Breast epithelium (tissue), 4 donors: ENCODE measurements at regions of chr11 and their contacts with region 1.

Region 1: DNA sequence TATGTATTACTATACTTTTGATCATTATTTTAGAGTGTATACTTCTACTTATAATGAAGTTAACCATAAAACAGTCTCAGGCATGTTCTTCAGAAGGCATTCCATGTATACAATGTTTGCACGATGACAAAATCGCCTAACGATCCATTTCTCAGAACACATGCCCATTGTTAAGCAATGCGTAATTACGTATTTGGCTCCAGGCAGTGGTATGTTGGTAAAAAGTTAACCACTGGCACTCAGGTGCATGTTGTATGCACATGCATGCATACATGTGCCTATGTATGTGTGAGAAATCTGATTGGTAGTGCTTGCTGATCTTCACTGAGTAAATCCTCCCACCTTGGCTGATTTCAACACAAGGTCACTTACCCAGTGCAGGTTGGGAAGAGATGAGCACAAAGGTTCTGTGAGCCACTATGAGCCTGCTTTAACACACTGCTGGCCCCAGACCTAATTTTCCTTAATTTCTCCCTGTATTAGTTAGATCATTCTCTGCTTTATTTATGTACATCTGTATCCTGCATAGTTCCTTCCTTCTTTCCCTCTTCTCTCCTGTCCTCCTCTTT is 164.6 kb downstream of the ARHGAP42 start:
- DNase-seq: no peak
- H3K4me3 ChIP-seq: no peak overlapping the region
- H3K27ac ChIP-seq: no peak overlapping the region
- H3K4me1 ChIP-seq: no peaks in the 10 kb centered on the region
- H3K27me3 ChIP-seq: no peaks in the 10 kb centered on the region
- CTCF ChIP-seq: no peak
- POLR2A ChIP-seq: no peak

Region 2: DNA sequence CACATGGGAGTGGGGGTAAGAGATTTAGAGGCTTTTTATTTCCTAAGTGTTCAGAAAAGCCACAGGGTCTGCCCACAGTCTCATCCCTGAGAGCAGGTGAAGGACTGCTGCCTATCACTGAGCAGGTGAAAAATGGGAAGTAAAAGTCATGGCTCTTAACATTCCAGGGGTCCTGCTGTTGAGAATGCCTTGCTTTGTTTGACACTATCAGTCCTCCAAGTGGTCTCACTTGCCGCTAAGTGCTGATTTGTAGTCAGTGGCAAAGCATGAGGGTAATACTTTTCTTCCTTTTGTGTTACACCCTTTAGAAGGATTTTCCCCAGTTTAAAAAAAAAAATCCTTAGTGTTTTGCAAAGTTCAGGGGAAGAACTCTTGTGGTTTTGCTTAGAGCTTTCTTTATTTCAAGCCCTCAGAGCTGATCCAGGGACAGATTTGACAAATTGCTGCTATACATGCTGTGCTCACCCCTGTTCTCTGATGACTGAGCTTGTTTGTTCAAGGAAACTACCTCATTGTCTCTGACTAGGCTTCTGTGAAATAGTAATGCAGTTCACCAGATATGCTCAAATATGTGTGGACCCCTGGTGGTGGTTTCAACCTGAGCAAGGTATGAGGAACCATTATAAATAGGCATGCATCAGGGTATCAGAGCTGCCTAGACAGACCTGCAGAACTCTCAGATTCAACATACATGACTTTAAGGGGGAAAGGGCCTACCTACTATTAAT is 23.6 kb before region 1 on chr11:
- intact Hi-C with region 1: loop called (anchors 2 kb)
- DNase-seq: no peak
- H3K4me3 ChIP-seq: no peak overlapping the region
- H3K27ac ChIP-seq: no peak overlapping the region
- H3K4me1 ChIP-seq: peaks cover 0 to 3% of the 10 kb centered on the region in 2 donors
- H3K27me3 ChIP-seq: no peaks in the 10 kb centered on the region
- CTCF ChIP-seq: no peak
- POLR2A ChIP-seq: no peak

Region 3: GRCh38 chr11:102007567-102008437 is 1156.1 kb after region 1 on chr11:
- intact Hi-C with region 1: no loop called
- DNase-seq: no peak
- H3K4me3 ChIP-seq: no peak overlapping the region
- H3K27ac ChIP-seq: peak overlapping the region in 1 of 2 donors; percentile 22
- H3K4me1 ChIP-seq: peaks cover 0 to 6% of the 10 kb centered on the region in 2 donors
- H3K27me3 ChIP-seq: no peaks in the 10 kb centered on the region
- CTCF ChIP-seq: peak; percentile 45 to 58 (median 53)
- POLR2A ChIP-seq: no peak